ENCODE measurements at regions of chr1 and their contacts with region 1.

Region 1: GRCh38 chr1:204941421-204942338 is 71.0 kb downstream of the NFASC start:
- DNase-seq: peak; percentile 60 to 72
- ATAC-seq: peak; percentile 63 to 84 (median 80)
- H3K4me3 ChIP-seq: no peak overlapping the region
- H3K27ac ChIP-seq: no peak overlapping the region
- H3K4me1 ChIP-seq: peaks cover 0 to 8% (median 0%) of the 10 kb centered on the region in 9 donors
- H3K27me3 ChIP-seq: peaks cover 0 to 3% (median 0%) of the 10 kb centered on the region in 7 donors
- CTCF ChIP-seq: peak; percentile 80 to 95 (median 88)

Region 2: DNA sequence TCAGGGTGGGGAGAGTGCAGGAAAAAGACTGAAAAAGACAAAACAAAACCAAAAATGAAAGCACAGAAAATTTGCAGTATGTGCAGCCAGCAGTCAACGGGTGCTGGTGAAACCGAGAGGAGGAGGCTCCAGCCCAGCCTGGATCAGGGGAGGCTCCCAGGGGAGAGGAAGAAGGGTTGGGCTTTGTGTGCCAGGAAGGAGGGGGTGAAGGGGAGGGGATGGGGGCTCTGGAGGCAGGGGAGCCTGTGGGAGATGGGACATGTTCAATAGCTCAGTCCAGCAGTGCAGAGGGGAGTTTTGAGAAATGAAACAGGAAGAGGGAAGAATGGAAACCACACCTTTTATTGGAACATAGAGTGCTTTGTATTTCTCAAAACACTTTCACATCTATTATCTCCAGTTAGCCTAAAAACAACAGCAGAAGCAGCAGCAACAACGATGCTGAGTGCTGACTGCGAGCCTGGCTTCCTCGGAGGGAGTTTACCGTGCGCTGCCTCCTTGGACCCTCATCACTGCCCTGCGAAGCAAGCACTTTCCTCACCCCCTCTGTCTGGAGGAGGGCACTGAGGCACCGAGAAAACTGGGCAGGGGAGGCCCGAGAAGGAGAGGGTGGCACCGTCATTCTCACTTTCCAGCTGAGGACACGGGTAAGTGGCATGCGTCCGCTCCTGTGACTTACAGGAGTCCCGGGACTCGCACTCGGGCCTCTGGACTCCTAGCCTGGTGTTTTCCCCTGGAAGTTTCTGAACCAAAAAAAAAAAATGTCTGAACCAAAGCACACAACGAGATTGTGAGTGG is 362.6 kb before region 1 on chr1:
- intact Hi-C with region 1: loop called in 1 of 10 experiments (anchors 10 kb)
- DNase-seq: peak; percentile 24 to 28
- ATAC-seq: peak; percentile 11 to 79 (median 58)
- H3K4me3 ChIP-seq: peak overlapping the region in 9 of 10 donors; percentile 4 to 53 (median 46)
- H3K27ac ChIP-seq: peak overlapping the region in 6 of 10 donors; percentile 3 to 69 (median 37)
- H3K4me1 ChIP-seq: peaks cover 4 to 32% (median 18%) of the 10 kb centered on the region in 9 donors
- H3K27me3 ChIP-seq: no peaks in the 10 kb centered on the region
- CTCF ChIP-seq: no peak

Region 3: DNA sequence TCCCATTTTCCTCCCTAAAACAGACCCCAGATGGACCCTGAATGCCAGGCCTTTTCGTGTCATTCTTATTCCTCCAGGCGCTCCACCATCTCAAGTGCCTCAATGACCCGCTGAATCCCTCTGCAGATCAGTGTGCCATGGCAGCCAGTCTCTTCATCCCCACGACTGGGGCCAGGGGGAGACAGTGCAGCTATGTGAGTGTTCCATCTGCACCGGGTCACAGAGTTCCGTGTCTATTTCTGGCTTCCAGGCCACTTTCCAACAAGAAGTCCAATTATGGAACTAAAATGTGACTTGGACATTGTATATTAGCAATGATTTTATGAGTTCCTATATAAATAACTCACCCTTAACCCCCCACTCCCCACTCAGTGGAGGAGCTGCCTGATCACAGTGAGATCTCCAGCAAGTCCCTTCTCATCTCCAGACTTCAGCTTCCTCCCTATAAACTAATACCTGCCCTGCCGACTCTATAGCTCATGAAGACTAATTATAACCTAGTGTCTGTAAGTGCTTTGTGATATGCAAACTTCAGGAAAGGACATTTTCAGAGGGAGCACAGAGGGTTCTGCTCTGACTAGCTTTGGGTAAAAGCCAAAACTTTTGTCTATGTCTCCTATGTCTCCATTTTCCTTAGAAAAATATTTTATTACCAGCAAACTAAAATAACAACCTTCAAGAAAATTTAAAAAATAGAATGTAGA is 127.3 kb before region 1 on chr1:
- intact Hi-C with region 1: loop called in 5 of 10 experiments (anchors 2 to 5 kb)
- DNase-seq: peak; percentile 43 to 53
- ATAC-seq: peak; percentile 75 to 97 (median 92)
- H3K4me3 ChIP-seq: no peak overlapping the region
- H3K27ac ChIP-seq: peak overlapping the region; percentile 46 to 75 (median 62)
- H3K4me1 ChIP-seq: peaks cover 0 to 41% (median 20%) of the 10 kb centered on the region in 9 donors
- H3K27me3 ChIP-seq: no peaks in the 10 kb centered on the region
- CTCF ChIP-seq: peak in 3 of 9 donors; percentile 28 to 37 (median 29)

Region 4: GRCh38 chr1:204868340-204868700 is 73.4 kb before region 1 on chr1:
- intact Hi-C with region 1: loop called in 2 of 10 experiments (anchors 5 to 10 kb)
- DNase-seq: no peak
- ATAC-seq: peak in 5 of 8 donors; percentile 25 to 80 (median 55)
- H3K4me3 ChIP-seq: no peak overlapping the region
- H3K27ac ChIP-seq: peak overlapping the region in 7 of 10 donors; percentile 20 to 63 (median 32)
- H3K4me1 ChIP-seq: peaks cover 0 to 62% (median 17%) of the 10 kb centered on the region in 9 donors
- H3K27me3 ChIP-seq: peaks cover 0 to 11% (median 0%) of the 10 kb centered on the region in 7 donors
- CTCF ChIP-seq: no peak

Region 5: GRCh38 chr1:205077158-205077933 is 135.7 kb after region 1 on chr1:
- intact Hi-C with region 1: no loop called
- DNase-seq: peak in 1 of 2 donors; percentile 28
- ATAC-seq: peak; percentile 52 to 93 (median 81)
- H3K4me3 ChIP-seq: no peak overlapping the region
- H3K27ac ChIP-seq: no peak overlapping the region
- H3K4me1 ChIP-seq: peaks cover 0 to 17% (median 6%) of the 10 kb centered on the region in 9 donors
- H3K27me3 ChIP-seq: no peaks in the 10 kb centered on the region
- CTCF ChIP-seq: no peak

Measured in heart right ventricle (tissue), 16 donors.